Activated CD4-positive, alpha-beta memory T cell treated with anti-CD3 and anti-CD28 coated beads, Interleukin-2, amount 10 ng/mL, durations not matched to agents 7 days and 5 days (primary cell): ENCODE measurements at regions of chr3 and their contacts with region 1.

Region 1: DNA sequence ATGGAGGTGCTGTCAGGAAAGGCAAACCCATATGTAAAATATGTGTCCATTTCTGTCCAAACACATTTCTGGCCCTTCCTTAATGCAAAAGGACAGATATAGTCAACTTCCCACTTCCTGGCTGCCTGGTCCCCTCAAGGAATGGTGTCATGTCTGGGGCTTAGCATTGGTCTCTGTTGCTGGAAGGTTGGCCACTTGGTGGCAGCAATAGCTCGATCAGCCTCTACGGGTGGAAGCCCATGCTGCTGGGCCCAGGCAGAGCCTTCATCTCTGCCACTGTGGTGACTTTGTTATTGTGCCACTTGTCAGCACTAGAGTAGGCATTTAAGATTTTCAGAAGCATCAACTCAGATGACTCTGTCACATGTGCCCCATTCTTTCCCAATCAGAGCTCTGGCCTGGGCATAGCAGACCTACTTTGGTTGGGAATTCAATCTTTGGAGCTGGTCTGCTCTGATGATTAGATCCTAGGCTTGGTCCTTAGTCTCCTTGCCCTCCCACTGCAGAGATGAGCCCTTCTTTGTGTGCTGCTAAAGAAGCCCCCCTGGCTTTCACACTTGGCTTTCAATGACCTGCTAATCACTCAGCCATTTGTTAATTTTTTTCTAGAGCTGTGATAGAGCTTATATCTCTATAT is 51.0 kb upstream of the SPSB4 start:
- DNase-seq: peak; percentile 60
- H3K4me3 Mint-ChIP-seq: no peak overlapping the region
- H3K27ac Mint-ChIP-seq: no peak overlapping the region
- H3K4me1 Mint-ChIP-seq: peaks cover 5% of the 10 kb centered on the region
- H3K27me3 Mint-ChIP-seq: peaks cover 8% of the 10 kb centered on the region

Region 2: GRCh38 chr3:140651287-140651686 is 348.9 kb before region 1 on chr3:
- CTCF ChIA-PET with region 1: no interaction called
- POLR2A ChIA-PET with region 1: no interaction called
- DNase-seq: no peak
- H3K4me3 Mint-ChIP-seq: no peak overlapping the region
- H3K27ac Mint-ChIP-seq: no peak overlapping the region
- H3K4me1 Mint-ChIP-seq: no peaks in the 10 kb centered on the region
- H3K27me3 Mint-ChIP-seq: no peaks in the 10 kb centered on the region

Region 3: DNA sequence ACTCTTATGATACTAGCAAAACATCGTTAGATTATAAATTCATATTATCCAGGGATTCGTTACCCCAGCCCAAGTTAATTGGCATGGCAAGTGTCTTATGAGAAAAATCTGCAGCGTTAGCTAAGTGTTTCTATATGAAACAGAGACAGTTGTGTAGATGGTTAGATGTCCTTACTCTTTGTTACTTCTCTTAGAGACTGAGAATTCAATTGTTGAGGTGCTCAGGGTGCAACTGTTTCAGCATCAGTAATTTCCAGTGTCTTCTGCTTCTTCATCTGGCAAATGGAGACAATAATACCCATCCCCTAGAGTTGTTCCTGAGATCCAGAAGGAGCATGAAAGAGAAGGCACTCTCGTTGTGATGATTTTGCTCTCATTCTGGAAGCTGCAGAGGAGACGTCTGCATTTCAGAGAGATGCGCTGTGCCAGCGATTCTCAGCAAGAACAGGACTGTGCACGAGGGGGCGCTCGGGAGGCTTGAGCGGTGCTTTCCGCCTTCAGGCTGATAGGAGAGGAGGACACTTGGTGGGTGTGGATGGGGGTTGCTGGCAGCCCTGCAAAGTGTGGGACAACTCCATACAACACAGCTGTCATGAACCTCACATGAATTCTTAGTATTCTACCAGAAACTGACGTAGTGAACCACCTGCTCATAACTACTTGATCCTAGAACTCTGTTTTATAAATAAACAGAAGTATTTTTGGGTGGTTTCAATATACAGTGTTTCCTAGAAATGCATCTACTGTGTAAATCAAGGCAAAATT is 11.3 kb after region 1 on chr3:
- CTCF ChIA-PET with region 1: interaction called, 25 read pairs
- POLR2A ChIA-PET with region 1: no interaction called
- DNase-seq: peak; percentile 80
- H3K4me3 Mint-ChIP-seq: no peak overlapping the region
- H3K27ac Mint-ChIP-seq: no peak overlapping the region
- H3K4me1 Mint-ChIP-seq: peaks cover 4% of the 10 kb centered on the region
- H3K27me3 Mint-ChIP-seq: peaks cover 41% of the 10 kb centered on the region

Region 4: GRCh38 chr3:141105828-141106628 is 105.9 kb after region 1 on chr3:
- CTCF ChIA-PET with region 1: interaction called, 11 read pairs
- POLR2A ChIA-PET with region 1: no interaction called
- DNase-seq: peak; percentile 61
- H3K4me3 Mint-ChIP-seq: no peak overlapping the region
- H3K27ac Mint-ChIP-seq: no peak overlapping the region
- H3K4me1 Mint-ChIP-seq: no peaks in the 10 kb centered on the region
- H3K27me3 Mint-ChIP-seq: no peaks in the 10 kb centered on the region

Region 5: DNA sequence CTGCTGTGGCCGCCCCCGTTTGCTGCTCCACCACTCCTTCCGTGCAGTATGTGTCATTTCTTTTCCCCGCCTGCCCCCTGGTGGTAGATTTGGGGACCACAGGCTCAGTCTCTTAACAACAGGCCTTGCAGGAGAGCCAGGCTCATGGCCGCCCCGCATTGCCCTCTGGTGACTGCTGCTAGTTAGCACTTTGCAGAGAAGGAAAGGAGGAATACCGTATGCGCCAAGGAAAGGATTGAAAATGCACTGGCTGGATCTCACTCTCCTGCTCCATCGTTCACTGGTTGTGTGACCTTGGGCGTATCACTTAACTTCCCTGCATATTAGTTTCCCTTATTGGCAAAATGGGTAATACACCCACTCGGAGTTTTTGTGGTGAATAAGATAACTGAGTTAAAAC is 192.2 kb after region 1 on chr3:
- CTCF ChIA-PET with region 1: interaction called, 39 read pairs
- POLR2A ChIA-PET with region 1: no interaction called
- DNase-seq: peak; percentile 95
- H3K4me3 Mint-ChIP-seq: no peak overlapping the region
- H3K27ac Mint-ChIP-seq: no peak overlapping the region
- H3K4me1 Mint-ChIP-seq: peaks cover 15% of the 10 kb centered on the region
- H3K27me3 Mint-ChIP-seq: peaks cover 27% of the 10 kb centered on the region

Region 6: DNA sequence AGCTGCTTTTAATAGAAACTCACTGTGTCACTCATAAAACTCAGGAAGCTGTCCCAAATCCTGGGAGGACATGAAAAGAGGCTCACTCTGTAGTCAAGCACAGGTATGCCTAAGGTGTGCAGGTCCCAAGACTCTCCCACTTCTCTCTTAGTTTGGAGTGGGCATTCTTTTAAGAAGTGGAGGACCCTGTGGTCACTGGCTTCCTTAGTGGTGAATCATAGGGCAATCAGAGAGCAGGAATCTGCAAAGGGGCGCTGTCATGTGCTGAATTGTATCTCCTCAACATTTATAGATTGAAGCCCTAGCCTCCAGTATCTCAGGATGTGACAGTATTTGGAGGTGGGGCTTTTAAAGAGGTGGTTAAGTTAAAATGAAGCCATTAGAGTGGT is 321.0 kb after region 1 on chr3:
- CTCF ChIA-PET with region 1: no interaction called
- POLR2A ChIA-PET with region 1: no interaction called
- DNase-seq: no peak
- H3K4me3 Mint-ChIP-seq: no peak overlapping the region
- H3K27ac Mint-ChIP-seq: no peak overlapping the region
- H3K4me1 Mint-ChIP-seq: peaks cover 13% of the 10 kb centered on the region
- H3K27me3 Mint-ChIP-seq: no peaks in the 10 kb centered on the region